ENCODE measurements at regions of chr11 and their contacts with region 1.

Region 1: GRCh38 chr11:94897330-94897768 is 76.0 kb downstream of the CWC15 start:
- DNase-seq: peak; percentile 69
- ATAC-seq: peak; percentile 65
- H3K4me3 Mint-ChIP-seq: no peak overlapping the region
- H3K27ac Mint-ChIP-seq: no peak overlapping the region
- H3K4me1 Mint-ChIP-seq: no peaks in the 10 kb centered on the region
- H3K27me3 Mint-ChIP-seq: no peaks in the 10 kb centered on the region
- CTCF ChIP-seq: peak; percentile 84

Region 2: GRCh38 chr11:94623120-94623735 is 274.1 kb before region 1 on chr11:
- CTCF ChIA-PET with region 1: interaction called, 21 read pairs
- POLR2A ChIA-PET with region 1: no interaction called
- intact Hi-C with region 1: loop called (anchors 1 kb)
- DNase-seq: peak; percentile 70
- ATAC-seq: peak; percentile 90
- H3K4me3 Mint-ChIP-seq: no peak overlapping the region
- H3K27ac Mint-ChIP-seq: no peak overlapping the region
- H3K4me1 Mint-ChIP-seq: no peaks in the 10 kb centered on the region
- H3K27me3 Mint-ChIP-seq: peaks cover 8% of the 10 kb centered on the region
- CTCF ChIP-seq: peak; percentile 56

Region 3: DNA sequence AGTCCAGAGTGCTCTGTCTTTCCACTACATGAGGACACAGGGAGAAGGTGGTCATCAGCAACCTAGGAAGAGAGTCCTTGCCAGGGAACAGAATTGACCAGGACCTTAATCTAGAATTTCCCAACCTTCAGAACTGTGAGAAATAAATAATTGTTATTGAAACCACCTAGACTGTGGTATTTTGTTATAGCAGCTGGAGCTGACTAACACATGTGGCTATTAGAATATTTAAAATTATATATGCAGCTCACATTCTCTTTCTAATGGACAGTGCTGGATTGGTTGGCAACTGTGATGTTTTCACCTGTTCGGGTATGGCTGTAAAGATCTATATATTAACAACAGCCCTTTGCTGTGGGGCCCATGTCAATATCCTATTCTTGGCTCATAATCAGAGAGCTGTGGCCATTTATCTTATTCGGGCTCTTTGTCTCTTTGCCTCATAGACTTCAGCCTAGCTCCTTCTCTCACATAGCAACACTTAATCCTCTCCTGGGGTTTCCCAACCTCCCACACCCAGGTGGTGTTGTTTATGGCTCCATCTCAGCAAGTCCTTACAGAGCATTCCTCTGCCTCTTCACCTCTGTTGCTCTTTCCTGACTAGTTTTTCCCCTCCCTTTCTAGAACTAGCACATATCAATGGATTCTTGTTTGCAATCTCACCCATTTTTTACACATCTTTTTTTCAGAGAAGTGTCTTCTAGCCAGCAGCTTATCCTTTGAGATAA is 175.6 kb before region 1 on chr11:
- CTCF ChIA-PET with region 1: no interaction called
- POLR2A ChIA-PET with region 1: no interaction called
- intact Hi-C with region 1: no loop called
- DNase-seq: no peak
- ATAC-seq: no peak
- H3K4me3 Mint-ChIP-seq: no peak overlapping the region
- H3K27ac Mint-ChIP-seq: no peak overlapping the region
- H3K4me1 Mint-ChIP-seq: no peaks in the 10 kb centered on the region
- H3K27me3 Mint-ChIP-seq: peaks cover 7% of the 10 kb centered on the region
- CTCF ChIP-seq: no peak

Region 4: GRCh38 chr11:94786264-94787126 is 110.9 kb before region 1 on chr11:
- CTCF ChIA-PET with region 1: interaction called, 25 read pairs
- POLR2A ChIA-PET with region 1: no interaction called
- intact Hi-C with region 1: loop called (anchors 5 kb)
- DNase-seq: no peak
- ATAC-seq: peak; percentile 61
- H3K4me3 Mint-ChIP-seq: no peak overlapping the region
- H3K27ac Mint-ChIP-seq: no peak overlapping the region
- H3K4me1 Mint-ChIP-seq: no peaks in the 10 kb centered on the region
- H3K27me3 Mint-ChIP-seq: peaks cover 7% of the 10 kb centered on the region
- CTCF ChIP-seq: peak; percentile 73

Region 5: GRCh38 chr11:94854770-94855633 is 42.3 kb before region 1 on chr11:
- CTCF ChIA-PET with region 1: no interaction called
- POLR2A ChIA-PET with region 1: no interaction called
- intact Hi-C with region 1: no loop called
- DNase-seq: no peak
- ATAC-seq: no peak
- H3K4me3 Mint-ChIP-seq: no peak overlapping the region
- H3K27ac Mint-ChIP-seq: no peak overlapping the region
- H3K4me1 Mint-ChIP-seq: no peaks in the 10 kb centered on the region
- H3K27me3 Mint-ChIP-seq: no peaks in the 10 kb centered on the region
- CTCF ChIP-seq: no peak

Region 6: GRCh38 chr11:94885133-94885532 is 12.2 kb before region 1 on chr11:
- CTCF ChIA-PET with region 1: interaction called, 15 read pairs
- POLR2A ChIA-PET with region 1: no interaction called
- intact Hi-C with region 1: no loop called
- DNase-seq: no peak
- ATAC-seq: no peak
- H3K4me3 Mint-ChIP-seq: no peak overlapping the region
- H3K27ac Mint-ChIP-seq: no peak overlapping the region
- H3K4me1 Mint-ChIP-seq: no peaks in the 10 kb centered on the region
- H3K27me3 Mint-ChIP-seq: no peaks in the 10 kb centered on the region
- CTCF ChIP-seq: no peak